ENCODE measurements at regions of chr17 and their contacts with region 1.

Region 1: GRCh38 chr17:16285957-16286640 is 67.2 kb downstream of the CENPV start:
- DNase-seq: peak; percentile 89
- CTCF ChIP-seq: peak; percentile 61

Region 2: DNA sequence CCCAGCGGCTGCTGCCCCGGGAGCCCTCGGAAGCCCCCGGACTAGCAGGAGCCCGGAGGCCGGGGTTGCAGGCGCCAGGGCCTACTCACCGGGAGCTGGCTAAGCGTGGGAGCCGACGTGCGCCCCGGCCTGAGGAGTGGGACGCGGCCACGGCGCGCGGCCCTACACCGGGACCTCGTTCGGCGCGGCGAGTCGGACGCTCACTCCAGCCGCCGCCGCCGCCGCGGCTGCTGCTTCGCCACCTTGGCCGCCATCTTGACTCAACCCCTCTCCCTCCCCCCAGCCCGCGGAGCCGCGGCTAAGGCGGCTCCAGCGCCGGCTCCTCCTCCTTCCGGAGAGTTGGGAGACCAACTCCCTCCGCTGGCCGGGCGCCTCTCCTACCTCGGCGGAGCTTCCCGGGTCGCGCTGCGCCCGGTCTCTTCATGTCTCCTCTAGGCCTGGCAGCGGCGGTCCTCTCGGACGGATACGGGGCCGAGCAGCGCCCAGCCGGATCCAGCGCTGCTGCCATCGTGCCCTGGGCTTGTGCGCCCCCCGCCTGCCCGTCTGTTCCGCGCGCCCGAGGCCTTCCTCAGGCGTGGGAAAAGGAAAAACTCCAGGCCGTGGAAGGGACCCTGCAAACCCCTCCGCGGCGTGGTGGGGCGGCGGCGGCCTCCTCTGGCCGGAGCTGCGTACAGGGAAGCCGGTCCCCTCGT is 70.7 kb before region 1 on chr17 and contains the start of gene NCOR1:
- CTCF ChIA-PET with region 1: interaction called, 11 read pairs
- POLR2A ChIA-PET with region 1: no interaction called
- DNase-seq: peak; percentile 91
- CTCF ChIP-seq: peak; percentile 27

Region 3: DNA sequence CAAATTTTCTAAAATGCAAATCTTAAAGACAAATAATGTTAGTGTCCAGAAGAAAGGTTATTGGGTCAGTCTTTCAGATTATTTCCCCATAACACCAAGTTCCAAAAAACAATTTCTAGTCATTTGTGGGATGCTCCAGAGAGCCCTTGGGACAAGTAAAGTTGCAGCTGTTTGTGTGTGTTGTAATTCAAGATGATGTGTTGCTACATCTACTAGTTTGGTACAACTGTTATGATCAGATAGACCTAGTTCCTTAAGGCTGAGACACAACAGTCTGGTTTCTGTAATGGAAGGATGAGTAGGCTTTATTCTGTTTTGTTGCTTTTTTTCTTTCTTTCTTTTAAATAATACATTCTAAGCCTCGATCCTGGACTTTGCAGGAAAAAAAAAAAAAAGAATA is 27.2 kb before region 1 on chr17:
- CTCF ChIA-PET with region 1: interaction called, 10 read pairs
- POLR2A ChIA-PET with region 1: no interaction called
- DNase-seq: no peak
- CTCF ChIP-seq: no peak

Region 4: GRCh38 chr17:16269658-16270057 is 16.4 kb before region 1 on chr17:
- CTCF ChIA-PET with region 1: interaction called, 66 read pairs
- POLR2A ChIA-PET with region 1: interaction called, 3 read pairs
- DNase-seq: no peak
- CTCF ChIP-seq: no peak

Region 5: GRCh38 chr17:16297367-16298139 is 11.5 kb after region 1 on chr17:
- CTCF ChIA-PET with region 1: interaction called, 31 read pairs
- POLR2A ChIA-PET with region 1: no interaction called
- DNase-seq: no peak
- CTCF ChIP-seq: no peak

Region 6: DNA sequence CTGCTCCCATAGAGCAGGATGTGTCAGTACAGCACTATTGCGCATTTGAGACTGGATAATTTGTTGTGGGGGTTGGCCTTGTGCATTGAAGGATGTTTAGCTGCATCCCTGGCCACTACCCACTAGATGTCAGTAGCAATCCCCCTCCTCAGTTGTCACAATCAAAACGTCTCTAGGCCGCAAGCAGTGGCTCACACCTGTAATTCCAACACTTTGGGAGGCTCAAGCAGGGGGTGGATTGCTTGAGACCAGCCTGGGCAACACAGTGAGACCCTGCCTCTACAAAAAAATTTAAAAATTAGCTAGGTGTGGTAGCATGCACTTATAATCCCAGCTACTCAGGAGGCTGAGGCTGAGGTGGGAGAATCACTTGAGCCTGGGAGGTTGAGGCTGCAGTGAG is 18.7 kb after region 1 on chr17:
- CTCF ChIA-PET with region 1: interaction called, 31 read pairs
- POLR2A ChIA-PET with region 1: no interaction called
- DNase-seq: peak; percentile 20
- CTCF ChIP-seq: peak; percentile 34

Measured in GM10248 (cell line).